ENCODE measurements at regions of chr6 and their contacts with region 1.

Region 1: DNA sequence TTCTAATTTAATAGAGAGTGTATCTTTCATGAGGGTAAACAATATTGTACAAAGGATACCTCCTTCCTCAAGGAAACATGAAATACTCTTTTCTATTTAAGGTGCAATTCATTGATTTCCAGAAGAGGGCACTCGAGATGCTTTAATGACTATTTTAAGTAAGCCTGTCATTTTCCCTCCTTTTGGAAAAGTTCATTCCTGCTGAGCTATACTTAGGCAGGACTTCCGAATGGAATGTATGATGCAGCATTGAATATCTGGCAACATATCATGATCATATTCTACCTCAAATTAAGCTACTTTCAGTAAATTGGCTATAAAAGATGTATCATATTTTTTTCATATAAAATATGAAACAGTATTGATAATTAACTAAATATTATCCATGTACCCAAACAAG is 5.0 kb downstream of the DST start:
- DNase-seq: no peak
- ATAC-seq: peak; percentile 53 to 82
- H3K4me3 ChIP-seq: no peak overlapping the region
- H3K27ac ChIP-seq: peak overlapping the region in 2 of 4 donors; percentile 12 to 27
- H3K4me1 ChIP-seq: peaks cover 0 to 7% of the 10 kb centered on the region in 2 donors
- H3K27me3 ChIP-seq: no peaks in the 10 kb centered on the region
- CTCF ChIP-seq: peak; percentile 64 to 85 (median 78)
- POLR2A ChIP-seq: no peak

Region 2: GRCh38 chr6:56595490-56596122 is 42.0 kb before region 1 on chr6:
- in situ Hi-C with region 1: no loop called
- intact Hi-C with region 1: no loop called
- DNase-seq: no peak
- ATAC-seq: no peak
- H3K4me3 ChIP-seq: no peak overlapping the region
- H3K27ac ChIP-seq: no peak overlapping the region
- H3K4me1 ChIP-seq: no peaks in the 10 kb centered on the region
- H3K27me3 ChIP-seq: no peaks in the 10 kb centered on the region
- CTCF ChIP-seq: peak in 4 of 5 experiments; percentile 22 to 62 (median 47)
- POLR2A ChIP-seq: no peak

Region 3: DNA sequence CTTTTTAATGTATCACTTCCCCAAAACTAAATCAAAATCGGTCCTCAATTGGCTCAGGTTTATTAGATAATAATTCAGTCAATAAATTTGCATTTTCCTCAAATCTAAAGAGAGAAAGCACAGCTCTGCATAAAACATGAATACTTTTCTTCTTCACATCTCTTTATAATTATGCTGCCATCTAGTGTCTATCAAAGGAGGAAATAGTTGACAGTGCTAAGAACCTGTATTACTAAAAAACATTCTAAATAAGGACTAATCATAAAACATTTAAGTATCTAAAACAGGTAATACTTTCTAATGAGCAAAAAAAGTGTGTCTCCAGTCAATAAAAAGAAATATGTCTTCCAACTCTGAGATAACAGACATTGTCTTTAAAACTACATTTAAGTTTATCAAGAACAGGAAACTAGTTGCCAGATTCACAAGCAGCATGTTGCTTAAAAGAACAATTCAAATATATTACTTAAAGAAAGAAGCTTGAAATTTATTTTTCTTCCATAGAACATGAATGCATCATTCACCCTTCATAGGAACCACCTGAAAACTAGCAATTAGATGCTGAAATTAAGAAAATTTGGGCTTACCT is 61.5 kb after region 1 on chr6:
- in situ Hi-C with region 1: loop called in 3 of 4 experiments (anchors 5 to 10 kb)
- intact Hi-C with region 1: loop called (anchors 1 kb)
- DNase-seq: no peak
- ATAC-seq: peak; percentile 44 to 68
- H3K4me3 ChIP-seq: no peak overlapping the region
- H3K27ac ChIP-seq: peak overlapping the region in 1 of 4 donors; percentile 89
- H3K4me1 ChIP-seq: peaks cover 14 to 19% of the 10 kb centered on the region in 2 donors
- H3K27me3 ChIP-seq: no peaks in the 10 kb centered on the region
- CTCF ChIP-seq: peak; percentile 55 to 79 (median 65)
- POLR2A ChIP-seq: no peak

Region 4: GRCh38 chr6:56764081-56764566 is 126.5 kb after region 1 on chr6:
- in situ Hi-C with region 1: no loop called
- intact Hi-C with region 1: loop called (anchors 5 kb)
- DNase-seq: no peak
- ATAC-seq: peak in 1 of 2 donors; percentile 79
- H3K4me3 ChIP-seq: no peak overlapping the region
- H3K27ac ChIP-seq: peak overlapping the region; percentile 6 to 88 (median 72)
- H3K4me1 ChIP-seq: peaks cover 54 to 73% of the 10 kb centered on the region in 2 donors
- H3K27me3 ChIP-seq: no peaks in the 10 kb centered on the region
- CTCF ChIP-seq: peak in 4 of 5 experiments; percentile 23 to 51 (median 40)
- POLR2A ChIP-seq: no peak

Region 5: GRCh38 chr6:56851541-56852259 is 214.1 kb after region 1 on chr6:
- in situ Hi-C with region 1: loop called (anchors 5 to 10 kb)
- intact Hi-C with region 1: loop called (anchors 1 kb)
- DNase-seq: peak in 1 of 2 donors; percentile 49
- ATAC-seq: peak; percentile 86 to 96
- H3K4me3 ChIP-seq: peak overlapping the region; percentile 51 to 52 (median 52)
- H3K27ac ChIP-seq: peak overlapping the region; percentile 14 to 51 (median 30)
- H3K4me1 ChIP-seq: peaks cover 8 to 19% of the 10 kb centered on the region in 2 donors
- H3K27me3 ChIP-seq: no peaks in the 10 kb centered on the region
- CTCF ChIP-seq: peak; percentile 58 to 71 (median 65)
- POLR2A ChIP-seq: no peak

Region 6: GRCh38 chr6:56970849-56971248 is 333.2 kb after region 1 on chr6:
- in situ Hi-C with region 1: no loop called
- intact Hi-C with region 1: no loop called
- DNase-seq: no peak
- ATAC-seq: no peak
- H3K4me3 ChIP-seq: no peak overlapping the region
- H3K27ac ChIP-seq: no peak overlapping the region
- H3K4me1 ChIP-seq: no peaks in the 10 kb centered on the region
- H3K27me3 ChIP-seq: no peaks in the 10 kb centered on the region
- CTCF ChIP-seq: no peak
- POLR2A ChIP-seq: no peak

Region 7: DNA sequence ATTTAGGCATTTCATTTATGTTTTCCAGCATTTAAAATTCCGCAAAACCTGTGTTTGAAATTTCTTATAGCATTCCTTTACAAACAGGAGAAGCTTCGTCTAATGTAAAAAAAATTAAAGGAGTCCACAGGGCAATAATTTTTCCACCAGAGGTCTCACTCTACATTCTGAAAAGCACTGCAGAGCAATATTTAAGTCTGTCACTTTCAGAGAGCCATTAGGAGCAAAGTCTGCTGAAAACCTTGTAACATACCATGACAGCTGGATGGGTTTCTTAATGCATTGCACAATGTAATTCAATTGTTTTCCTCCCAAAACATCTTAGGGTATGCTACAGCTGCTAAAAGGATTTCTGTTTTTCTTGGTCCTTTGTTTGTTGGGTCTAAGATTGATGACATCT is 552.5 kb after region 1 on chr6:
- in situ Hi-C with region 1: loop called in 1 of 4 experiments (anchors 25 kb)
- intact Hi-C with region 1: no loop called
- DNase-seq: no peak
- ATAC-seq: no peak
- H3K4me3 ChIP-seq: no peak overlapping the region
- H3K27ac ChIP-seq: no peak overlapping the region
- H3K4me1 ChIP-seq: no peaks in the 10 kb centered on the region
- H3K27me3 ChIP-seq: no peaks in the 10 kb centered on the region
- CTCF ChIP-seq: peak in 1 of 5 experiments; percentile 32
- POLR2A ChIP-seq: no peak

Measured in gastrocnemius medialis (tissue), 4 donors.